ENCODE measurements at regions of chr3 and their contacts with region 1.

Region 1: GRCh38 chr3:39189959-39190269 is 2.5 kb downstream of the XIRP1 start:
- DNase-seq: no peak
- H3K4me3 ChIP-seq: no peak overlapping the region
- H3K27ac ChIP-seq: no peak overlapping the region
- H3K27me3 ChIP-seq: no peaks in the 10 kb centered on the region
- CTCF ChIP-seq: peak; percentile 82

Region 2: GRCh38 chr3:39166134-39166731 is 23.7 kb before region 1 on chr3:
- CTCF ChIA-PET with region 1: interaction called, 37 read pairs
- POLR2A ChIA-PET with region 1: no interaction called
- DNase-seq: no peak
- H3K4me3 ChIP-seq: no peak overlapping the region
- H3K27ac ChIP-seq: peak overlapping the region; percentile 12
- H3K27me3 ChIP-seq: no peaks in the 10 kb centered on the region
- CTCF ChIP-seq: no peak

Region 3: GRCh38 chr3:39177708-39178332 is 12.1 kb before region 1 on chr3:
- CTCF ChIA-PET with region 1: interaction called, 38 read pairs
- POLR2A ChIA-PET with region 1: no interaction called
- DNase-seq: peak; percentile 86
- H3K4me3 ChIP-seq: peak overlapping the region; percentile 62
- H3K27ac ChIP-seq: peak overlapping the region; percentile 90
- H3K27me3 ChIP-seq: no peaks in the 10 kb centered on the region
- CTCF ChIP-seq: no peak

Region 4: GRCh38 chr3:39202094-39202493 is 12.2 kb after region 1 on chr3:
- CTCF ChIA-PET with region 1: interaction called, 16 read pairs
- POLR2A ChIA-PET with region 1: no interaction called
- DNase-seq: no peak
- H3K4me3 ChIP-seq: no peak overlapping the region
- H3K27ac ChIP-seq: no peak overlapping the region
- H3K27me3 ChIP-seq: peaks cover 52% of the 10 kb centered on the region
- CTCF ChIP-seq: no peak